CD8-positive, alpha-beta T cell (primary cell): ENCODE measurements at regions of chr7 and their contacts with region 1.

Region 1: DNA sequence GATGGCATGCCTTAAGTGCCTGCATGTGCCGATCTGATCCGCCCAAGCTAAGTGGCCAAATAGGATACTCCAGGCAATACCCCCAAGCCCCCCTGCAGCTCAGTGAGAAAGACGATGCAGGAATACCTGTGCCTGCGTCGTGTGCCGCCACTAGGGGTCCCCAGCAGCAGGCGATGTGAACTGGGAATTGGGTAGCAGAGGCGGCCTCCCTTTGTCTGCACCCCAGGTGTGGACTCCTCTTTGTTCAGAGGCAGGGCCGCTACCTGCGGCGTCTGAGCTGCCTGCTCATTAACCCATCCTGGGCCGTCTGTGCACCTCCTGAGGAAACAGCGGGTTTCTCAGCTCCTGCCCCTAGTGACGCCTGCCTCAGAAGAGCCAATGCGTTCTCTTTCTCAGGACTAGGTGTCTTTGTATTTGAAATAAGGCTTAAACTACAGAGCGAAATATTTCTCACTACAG is 4.8 kb upstream of the CHN2 start:
- DNase-seq: peak; percentile 26 to 79 (median 69)
- ATAC-seq: peak; percentile 78
- H3K4me3 ChIP-seq: no peak overlapping the region
- H3K4me3 Mint-ChIP-seq: no peak overlapping the region
- H3K27ac ChIP-seq: no peak overlapping the region
- H3K27ac Mint-ChIP-seq: no peak overlapping the region
- H3K4me1 ChIP-seq: no peaks in the 10 kb centered on the region
- H3K4me1 Mint-ChIP-seq: peaks cover 4% of the 10 kb centered on the region
- H3K27me3 ChIP-seq: no peaks in the 10 kb centered on the region
- H3K27me3 Mint-ChIP-seq: peaks cover 6% of the 10 kb centered on the region
- CTCF ChIP-seq: peak; percentile 78

Region 2: DNA sequence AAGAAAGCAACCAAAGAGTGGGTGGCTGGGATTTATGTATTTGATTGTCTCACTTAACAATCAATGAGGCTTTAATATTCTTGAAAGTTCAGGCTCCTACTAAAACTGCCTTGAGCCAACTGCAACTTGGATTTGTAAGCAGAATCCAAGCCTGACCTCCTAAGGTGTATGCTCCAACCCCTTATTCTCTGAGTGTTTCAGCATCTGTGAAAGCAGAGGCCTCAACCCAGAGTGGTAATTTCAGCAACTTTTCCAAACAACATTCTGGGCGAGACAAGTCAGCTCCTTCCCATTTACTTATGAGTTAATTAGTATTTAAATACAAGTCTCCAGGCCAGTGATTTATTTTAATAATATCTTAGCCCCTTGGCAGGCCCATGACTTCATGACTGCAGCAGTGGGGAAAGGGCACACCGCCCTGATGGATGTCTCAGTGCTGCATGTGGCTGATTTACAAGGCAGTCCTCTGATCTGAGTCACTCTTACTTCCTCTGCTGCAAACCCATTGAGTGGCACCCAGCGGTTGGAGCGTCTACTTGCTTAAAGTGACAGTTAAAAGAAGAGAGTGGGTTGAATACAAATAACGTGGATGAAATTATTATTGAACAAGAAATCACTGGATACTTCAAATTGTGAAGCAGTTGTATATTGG is 440.7 kb before region 1 on chr7:
- CTCF ChIA-PET with region 1: no interaction called
- POLR2A ChIA-PET with region 1: no interaction called
- intact Hi-C with region 1: no loop called
- DNase-seq: peak in 4 of 9 experiments; percentile 2 to 20 (median 14)
- ATAC-seq: no peak
- H3K4me3 ChIP-seq: no peak overlapping the region
- H3K4me3 Mint-ChIP-seq: no peak overlapping the region
- H3K27ac ChIP-seq: no peak overlapping the region
- H3K27ac Mint-ChIP-seq: no peak overlapping the region
- H3K4me1 ChIP-seq: no peaks in the 10 kb centered on the region
- H3K4me1 Mint-ChIP-seq: peaks cover 3% of the 10 kb centered on the region
- H3K27me3 ChIP-seq: no peaks in the 10 kb centered on the region
- H3K27me3 Mint-ChIP-seq: no peaks in the 10 kb centered on the region
- CTCF ChIP-seq: no peak

Region 3: DNA sequence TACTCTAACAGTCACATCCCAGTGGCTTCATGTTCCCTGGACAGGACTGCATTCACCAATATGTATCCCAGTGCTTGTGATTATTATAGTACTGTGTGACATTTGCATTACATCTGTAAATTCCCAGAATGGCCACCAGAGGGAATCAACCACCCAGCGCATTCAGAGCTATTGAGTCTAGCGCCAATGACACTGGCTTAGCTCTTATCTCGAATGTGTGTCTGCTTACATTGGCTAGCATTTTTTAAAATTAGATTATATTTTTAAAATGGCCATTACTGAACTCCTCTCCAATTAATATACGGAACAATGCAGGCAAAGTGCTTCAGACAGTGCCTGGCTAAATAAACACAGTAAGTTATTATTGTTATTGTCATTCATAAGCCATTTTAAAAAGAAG is 267.9 kb before region 1 on chr7:
- CTCF ChIA-PET with region 1: interaction called, 21 read pairs
- POLR2A ChIA-PET with region 1: no interaction called
- intact Hi-C with region 1: loop called (anchors 2 kb)
- DNase-seq: peak in 8 of 9 experiments; percentile 5 to 70 (median 32)
- ATAC-seq: peak; percentile 88
- H3K4me3 ChIP-seq: no peak overlapping the region
- H3K4me3 Mint-ChIP-seq: no peak overlapping the region
- H3K27ac ChIP-seq: no peak overlapping the region
- H3K27ac Mint-ChIP-seq: no peak overlapping the region
- H3K4me1 ChIP-seq: peaks cover 6% of the 10 kb centered on the region
- H3K4me1 Mint-ChIP-seq: peaks cover 15% of the 10 kb centered on the region
- H3K27me3 ChIP-seq: no peaks in the 10 kb centered on the region
- H3K27me3 Mint-ChIP-seq: no peaks in the 10 kb centered on the region
- CTCF ChIP-seq: peak; percentile 74

Region 4: GRCh38 chr7:29177963-29178600 is 11.7 kb before region 1 on chr7:
- CTCF ChIA-PET with region 1: interaction called, 14 read pairs
- POLR2A ChIA-PET with region 1: no interaction called
- intact Hi-C with region 1: no loop called
- DNase-seq: peak in 1 of 9 experiments; percentile 37
- ATAC-seq: peak; percentile 44
- H3K4me3 ChIP-seq: no peak overlapping the region
- H3K4me3 Mint-ChIP-seq: no peak overlapping the region
- H3K27ac ChIP-seq: no peak overlapping the region
- H3K27ac Mint-ChIP-seq: no peak overlapping the region
- H3K4me1 ChIP-seq: no peaks in the 10 kb centered on the region
- H3K4me1 Mint-ChIP-seq: peaks cover 6% of the 10 kb centered on the region
- H3K27me3 ChIP-seq: no peaks in the 10 kb centered on the region
- H3K27me3 Mint-ChIP-seq: no peaks in the 10 kb centered on the region
- CTCF ChIP-seq: no peak

Region 5: GRCh38 chr7:29239638-29240037 is 49.9 kb after region 1 on chr7:
- CTCF ChIA-PET with region 1: interaction called, 7 read pairs
- POLR2A ChIA-PET with region 1: no interaction called
- intact Hi-C with region 1: loop called in 1 of 2 experiments (anchors 5 kb)
- DNase-seq: peak in 2 of 9 experiments; percentile 34 to 47
- ATAC-seq: no peak
- H3K4me3 ChIP-seq: no peak overlapping the region
- H3K4me3 Mint-ChIP-seq: no peak overlapping the region
- H3K27ac ChIP-seq: no peak overlapping the region
- H3K27ac Mint-ChIP-seq: no peak overlapping the region
- H3K4me1 ChIP-seq: no peaks in the 10 kb centered on the region
- H3K4me1 Mint-ChIP-seq: peaks cover 15% of the 10 kb centered on the region
- H3K27me3 ChIP-seq: no peaks in the 10 kb centered on the region
- H3K27me3 Mint-ChIP-seq: no peaks in the 10 kb centered on the region
- CTCF ChIP-seq: peak; percentile 34

Region 6: DNA sequence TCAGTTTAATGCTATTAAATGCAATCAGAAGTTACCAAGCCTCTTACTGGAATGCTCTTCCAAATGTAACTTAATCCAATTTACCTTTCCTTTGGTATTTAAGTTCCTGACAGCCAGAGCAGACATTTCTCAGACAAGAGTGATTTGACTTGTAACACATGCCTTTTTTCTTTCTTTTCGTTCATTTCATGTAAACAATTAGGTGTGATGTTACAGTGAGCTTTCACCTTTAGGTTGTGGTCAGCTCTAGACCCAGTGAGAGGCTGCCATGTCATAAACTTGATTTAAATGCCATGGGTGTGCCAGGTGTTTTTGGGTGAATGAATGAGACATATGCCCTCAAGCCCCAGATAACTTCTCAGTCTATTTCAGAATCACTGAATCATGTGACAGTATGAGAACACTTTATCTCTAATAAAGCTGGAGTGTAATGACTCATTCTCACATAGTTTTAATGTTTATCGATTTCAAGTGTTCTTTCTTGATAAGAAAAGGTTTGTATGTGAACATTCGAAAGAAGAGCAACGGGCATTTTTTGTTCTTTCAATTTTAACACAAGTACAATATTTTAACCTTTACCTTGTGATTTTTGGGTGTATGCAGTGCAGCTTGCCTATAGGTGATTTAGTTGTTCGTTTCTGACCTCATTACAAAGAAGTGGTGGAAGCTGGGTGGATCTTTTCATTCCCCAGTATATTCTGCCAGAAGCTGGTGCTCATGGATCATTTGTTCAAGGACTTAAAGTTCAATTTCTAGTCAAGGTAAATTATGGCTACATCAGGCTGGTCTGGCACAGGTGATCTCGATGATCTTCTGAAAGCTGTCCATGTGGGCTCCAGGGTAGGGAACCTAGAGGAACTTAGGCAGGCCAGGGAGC is 66.4 kb after region 1 on chr7:
- CTCF ChIA-PET with region 1: no interaction called
- POLR2A ChIA-PET with region 1: no interaction called
- intact Hi-C with region 1: no loop called
- DNase-seq: peak in 2 of 9 experiments; percentile 25 to 58
- ATAC-seq: peak; percentile 83
- H3K4me3 ChIP-seq: no peak overlapping the region
- H3K4me3 Mint-ChIP-seq: no peak overlapping the region
- H3K27ac ChIP-seq: no peak overlapping the region
- H3K27ac Mint-ChIP-seq: no peak overlapping the region
- H3K4me1 ChIP-seq: no peaks in the 10 kb centered on the region
- H3K4me1 Mint-ChIP-seq: peaks cover 14% of the 10 kb centered on the region
- H3K27me3 ChIP-seq: no peaks in the 10 kb centered on the region
- H3K27me3 Mint-ChIP-seq: no peaks in the 10 kb centered on the region
- CTCF ChIP-seq: no peak

Region 7: GRCh38 chr7:29337546-29338116 is 147.9 kb after region 1 on chr7:
- CTCF ChIA-PET with region 1: interaction called, 56 read pairs
- POLR2A ChIA-PET with region 1: interaction called, 14 read pairs
- intact Hi-C with region 1: loop called in 1 of 2 experiments (anchors 2 kb)
- DNase-seq: peak; percentile 19 to 87 (median 50)
- ATAC-seq: peak; percentile 91
- H3K4me3 ChIP-seq: peak overlapping the region in 1 of 2 experiments; percentile 16
- H3K4me3 Mint-ChIP-seq: peak overlapping the region; percentile 64
- H3K27ac ChIP-seq: peak overlapping the region; percentile 30 to 53
- H3K27ac Mint-ChIP-seq: peak overlapping the region; percentile 83
- H3K4me1 ChIP-seq: peaks cover 30% of the 10 kb centered on the region
- H3K4me1 Mint-ChIP-seq: peaks cover 49% of the 10 kb centered on the region
- H3K27me3 ChIP-seq: no peaks in the 10 kb centered on the region
- H3K27me3 Mint-ChIP-seq: no peaks in the 10 kb centered on the region
- CTCF ChIP-seq: no peak

Region 8: GRCh38 chr7:29386196-29386765 is 196.5 kb after region 1 on chr7:
- CTCF ChIA-PET with region 1: interaction called, 11 read pairs
- POLR2A ChIA-PET with region 1: no interaction called
- intact Hi-C with region 1: no loop called
- DNase-seq: no peak
- ATAC-seq: no peak
- H3K4me3 ChIP-seq: no peak overlapping the region
- H3K4me3 Mint-ChIP-seq: no peak overlapping the region
- H3K27ac ChIP-seq: no peak overlapping the region
- H3K27ac Mint-ChIP-seq: no peak overlapping the region
- H3K4me1 ChIP-seq: no peaks in the 10 kb centered on the region
- H3K4me1 Mint-ChIP-seq: no peaks in the 10 kb centered on the region
- H3K27me3 ChIP-seq: no peaks in the 10 kb centered on the region
- H3K27me3 Mint-ChIP-seq: no peaks in the 10 kb centered on the region
- CTCF ChIP-seq: no peak

Region 9: DNA sequence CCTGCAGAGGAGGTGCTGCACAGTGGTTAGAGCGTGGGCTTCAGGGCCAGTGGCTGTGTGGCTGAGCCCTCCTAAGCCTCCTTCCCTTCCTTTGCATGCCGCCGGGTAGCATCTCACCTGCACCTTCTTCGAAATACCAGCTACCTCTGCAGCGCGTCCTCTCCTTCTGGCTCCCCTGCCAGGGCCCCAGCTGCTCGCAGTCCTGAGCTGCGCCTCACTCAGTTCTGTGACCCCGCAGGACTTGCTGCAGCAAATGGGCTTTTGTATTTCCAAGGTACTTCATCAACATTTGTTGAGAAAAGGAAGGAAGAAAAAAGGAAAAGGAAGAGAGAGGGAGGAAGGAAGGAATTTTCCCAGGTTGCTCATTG is 227.2 kb after region 1 on chr7:
- CTCF ChIA-PET with region 1: interaction called, 285 read pairs
- POLR2A ChIA-PET with region 1: no interaction called
- intact Hi-C with region 1: no loop called
- DNase-seq: no peak
- ATAC-seq: no peak
- H3K4me3 ChIP-seq: no peak overlapping the region
- H3K4me3 Mint-ChIP-seq: no peak overlapping the region
- H3K27ac ChIP-seq: no peak overlapping the region
- H3K27ac Mint-ChIP-seq: no peak overlapping the region
- H3K4me1 ChIP-seq: no peaks in the 10 kb centered on the region
- H3K4me1 Mint-ChIP-seq: no peaks in the 10 kb centered on the region
- H3K27me3 ChIP-seq: no peaks in the 10 kb centered on the region
- H3K27me3 Mint-ChIP-seq: no peaks in the 10 kb centered on the region
- CTCF ChIP-seq: no peak

Region 10: GRCh38 chr7:29500719-29501118 is 310.9 kb after region 1 on chr7:
- CTCF ChIA-PET with region 1: no interaction called
- POLR2A ChIA-PET with region 1: no interaction called
- intact Hi-C with region 1: no loop called
- DNase-seq: no peak
- ATAC-seq: no peak
- H3K4me3 ChIP-seq: no peak overlapping the region
- H3K4me3 Mint-ChIP-seq: no peak overlapping the region
- H3K27ac ChIP-seq: no peak overlapping the region
- H3K27ac Mint-ChIP-seq: no peak overlapping the region
- H3K4me1 ChIP-seq: no peaks in the 10 kb centered on the region
- H3K4me1 Mint-ChIP-seq: no peaks in the 10 kb centered on the region
- H3K27me3 ChIP-seq: no peaks in the 10 kb centered on the region
- H3K27me3 Mint-ChIP-seq: no peaks in the 10 kb centered on the region
- CTCF ChIP-seq: no peak